CD8-positive, alpha-beta T cell (primary cell): ENCODE measurements at regions of chr16 and their contacts with region 1.

Region 1: DNA sequence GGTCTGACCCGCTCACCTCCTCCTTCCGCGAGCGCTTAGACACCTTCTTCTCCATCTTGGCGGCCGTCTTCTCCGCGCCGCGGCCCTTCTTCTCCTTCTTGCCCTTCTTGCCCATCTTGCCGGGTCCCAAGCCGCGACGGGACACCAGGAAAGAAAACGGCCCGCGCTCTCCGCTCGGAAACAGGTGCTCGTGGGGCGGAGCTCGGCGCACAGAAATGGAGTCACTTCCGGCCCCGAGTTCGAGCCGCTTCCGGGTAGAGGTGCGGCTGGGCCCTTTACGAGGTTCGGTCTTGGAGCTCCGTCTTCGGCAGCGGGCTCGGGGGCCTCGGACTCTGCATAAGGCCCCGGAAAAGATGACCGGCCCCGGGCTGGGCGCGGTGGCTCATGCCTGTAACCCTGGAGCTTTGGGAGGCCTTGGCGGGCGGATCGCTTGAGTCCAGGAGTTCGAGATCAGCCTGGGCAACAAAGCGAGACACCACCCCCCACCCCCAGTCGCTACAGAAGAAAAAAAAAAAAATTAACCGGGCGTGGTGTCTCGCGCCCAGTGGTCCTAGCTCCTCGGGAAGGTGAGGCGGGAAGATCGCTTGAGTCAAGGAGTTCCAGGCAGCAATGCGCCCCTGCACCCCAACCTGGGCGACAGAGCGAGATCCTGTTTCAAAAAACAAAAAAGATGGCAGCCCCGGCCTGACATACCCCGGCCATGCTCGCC is at the start of gene KLHDC4:
- DNase-seq: peak; percentile 78 to 94 (median 89)
- ATAC-seq: peak; percentile 43
- H3K4me3 ChIP-seq: peak within 1 kb of the TSS; percentile 86 to 89
- H3K4me3 Mint-ChIP-seq: peak within 1 kb of the TSS; percentile 98
- H3K27ac ChIP-seq: peak within 1 kb of the TSS; percentile 88 to 95
- H3K27ac Mint-ChIP-seq: peak within 1 kb of the TSS; percentile 99
- H3K4me1 ChIP-seq: peaks cover 45% of the 10 kb centered on the region
- H3K4me1 Mint-ChIP-seq: peaks cover 42% of the 10 kb centered on the region
- H3K27me3 ChIP-seq: no peaks in the 10 kb centered on the region
- H3K27me3 Mint-ChIP-seq: no peaks in the 10 kb centered on the region
- CTCF ChIP-seq: no peak
- total RNA-seq, gene KLHDC4: 74.0 to 81.6 TPM

Region 2: GRCh38 chr16:86563489-86564345 is 1202.2 kb before region 1 on chr16:
- CTCF ChIA-PET with region 1: no interaction called
- POLR2A ChIA-PET with region 1: no interaction called
- intact Hi-C with region 1: loop called (anchors 2 to 5 kb)
- DNase-seq: peak; percentile 72 to 91 (median 86)
- ATAC-seq: peak; percentile 100
- H3K4me3 ChIP-seq: peak overlapping the region in 1 of 2 experiments; percentile 24
- H3K4me3 Mint-ChIP-seq: peak overlapping the region; percentile 62
- H3K27ac ChIP-seq: no peak overlapping the region
- H3K27ac Mint-ChIP-seq: no peak overlapping the region
- H3K4me1 ChIP-seq: peaks cover 22% of the 10 kb centered on the region
- H3K4me1 Mint-ChIP-seq: peaks cover 23% of the 10 kb centered on the region
- H3K27me3 ChIP-seq: peaks cover 18 to 25% of the 10 kb centered on the region in 2 experiments
- H3K27me3 Mint-ChIP-seq: peaks cover 52% of the 10 kb centered on the region
- CTCF ChIP-seq: peak; percentile 100

Region 3: GRCh38 chr16:87416826-87417527 is 349.0 kb before region 1 on chr16:
- CTCF ChIA-PET with region 1: interaction called, 4 read pairs
- POLR2A ChIA-PET with region 1: no interaction called
- intact Hi-C with region 1: loop called in 1 of 2 experiments (anchors 5 kb)
- DNase-seq: peak in 5 of 9 experiments; percentile 35 to 54 (median 42)
- ATAC-seq: no peak
- H3K4me3 ChIP-seq: no peak overlapping the region
- H3K4me3 Mint-ChIP-seq: no peak overlapping the region
- H3K27ac ChIP-seq: no peak overlapping the region
- H3K27ac Mint-ChIP-seq: no peak overlapping the region
- H3K4me1 ChIP-seq: no peaks in the 10 kb centered on the region
- H3K4me1 Mint-ChIP-seq: no peaks in the 10 kb centered on the region
- H3K27me3 ChIP-seq: no peaks in the 10 kb centered on the region
- H3K27me3 Mint-ChIP-seq: no peaks in the 10 kb centered on the region
- CTCF ChIP-seq: peak; percentile 60

Region 4: GRCh38 chr16:87636072-87636684 is 129.8 kb before region 1 on chr16:
- CTCF ChIA-PET with region 1: interaction called, 30 read pairs
- POLR2A ChIA-PET with region 1: interaction called, 6 read pairs
- intact Hi-C with region 1: loop called (anchors 1 to 2 kb)
- DNase-seq: peak; percentile 63 to 90 (median 83)
- ATAC-seq: peak; percentile 85
- H3K4me3 ChIP-seq: peak overlapping the region; percentile 54 to 64
- H3K4me3 Mint-ChIP-seq: peak overlapping the region; percentile 87
- H3K27ac ChIP-seq: peak overlapping the region; percentile 47 to 49
- H3K27ac Mint-ChIP-seq: peak overlapping the region; percentile 93
- H3K4me1 ChIP-seq: peaks cover 17% of the 10 kb centered on the region
- H3K4me1 Mint-ChIP-seq: peaks cover 15% of the 10 kb centered on the region
- H3K27me3 ChIP-seq: peaks cover 0 to 2% of the 10 kb centered on the region in 2 experiments
- H3K27me3 Mint-ChIP-seq: no peaks in the 10 kb centered on the region
- CTCF ChIP-seq: peak; percentile 65

Region 5: DNA sequence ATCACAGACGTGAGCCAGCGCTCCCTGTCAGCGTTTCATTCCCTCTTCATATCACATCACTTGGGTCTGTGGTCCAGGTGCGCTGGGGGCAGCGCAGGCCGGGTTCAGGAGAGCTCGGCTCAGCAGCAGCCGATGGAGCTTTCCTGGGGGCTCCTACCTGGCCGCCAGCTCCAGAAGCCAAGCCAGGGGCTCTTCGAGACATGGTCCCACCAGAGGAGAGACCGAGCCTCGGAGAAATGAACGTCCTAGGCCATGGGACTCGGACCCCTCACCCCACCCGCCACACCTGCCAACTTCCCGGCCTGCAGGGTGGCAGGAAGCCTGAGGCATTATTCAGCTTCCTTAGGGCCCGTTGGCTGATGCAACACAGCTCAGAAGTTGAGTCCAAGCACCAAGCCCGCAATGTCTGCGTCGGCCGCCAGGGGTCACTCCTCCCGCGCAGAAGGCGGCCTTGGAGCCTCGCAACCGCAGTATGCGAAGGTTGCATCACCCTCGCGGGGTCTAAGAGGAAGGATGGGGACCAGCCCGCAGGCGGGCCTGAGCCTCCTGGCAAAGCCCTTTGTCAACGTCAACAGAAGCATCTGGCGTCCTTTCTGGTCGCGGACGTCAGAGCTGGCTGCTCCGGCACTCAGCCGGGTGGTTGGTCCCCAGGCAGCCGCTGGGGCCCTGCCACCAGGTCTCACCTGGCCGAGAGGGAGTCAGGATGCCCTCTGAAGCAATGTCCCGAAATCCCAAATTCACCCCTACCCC is 13.1 kb after region 1 on chr16:
- CTCF ChIA-PET with region 1: interaction called, 71 read pairs
- POLR2A ChIA-PET with region 1: interaction called, 12 read pairs
- intact Hi-C with region 1: loop called in 1 of 2 experiments (anchors 1 kb)
- DNase-seq: peak; percentile 85 to 97 (median 94)
- ATAC-seq: peak; percentile 87
- H3K4me3 ChIP-seq: no peak overlapping the region
- H3K4me3 Mint-ChIP-seq: peak overlapping the region; percentile 39
- H3K27ac ChIP-seq: no peak overlapping the region
- H3K27ac Mint-ChIP-seq: peak overlapping the region; percentile 80
- H3K4me1 ChIP-seq: peaks cover 43% of the 10 kb centered on the region
- H3K4me1 Mint-ChIP-seq: peaks cover 38% of the 10 kb centered on the region
- H3K27me3 ChIP-seq: no peaks in the 10 kb centered on the region
- H3K27me3 Mint-ChIP-seq: peaks cover 2% of the 10 kb centered on the region
- CTCF ChIP-seq: peak; percentile 84

Region 6: GRCh38 chr16:88569985-88570690 is 804.2 kb after region 1 on chr16 and contains the start of gene ZC3H18:
- CTCF ChIA-PET with region 1: no interaction called
- POLR2A ChIA-PET with region 1: interaction called, 4 read pairs
- intact Hi-C with region 1: loop called (anchors 1 to 5 kb)
- DNase-seq: peak; percentile 96 to 100 (median 99)
- ATAC-seq: peak; percentile 95
- H3K4me3 ChIP-seq: peak within 1 kb of the TSS; percentile 67 to 76
- H3K4me3 Mint-ChIP-seq: peak within 1 kb of the TSS; percentile 87
- H3K27ac ChIP-seq: peak within 1 kb of the TSS; percentile 55 to 85
- H3K27ac Mint-ChIP-seq: peak within 1 kb of the TSS; percentile 91
- H3K4me1 ChIP-seq: peaks cover 20% of the 10 kb centered on the region
- H3K4me1 Mint-ChIP-seq: peaks cover 34% of the 10 kb centered on the region
- H3K27me3 ChIP-seq: no peaks in the 10 kb centered on the region
- H3K27me3 Mint-ChIP-seq: no peaks in the 10 kb centered on the region
- CTCF ChIP-seq: no peak
- total RNA-seq, gene ZC3H18: 140 to 149 TPM